ENCODE measurements at regions of chr10 and their contacts with region 1.

Region 1: GRCh38 chr10:120926611-120927010 is 75.4 kb downstream of the WDR11 start:
- DNase-seq: no peak
- ATAC-seq: peak in 1 of 4 donors; percentile 27
- H3K4me3 ChIP-seq: no peak overlapping the region
- H3K27ac ChIP-seq: no peak overlapping the region
- H3K4me1 ChIP-seq: no peaks in the 10 kb centered on the region
- H3K27me3 ChIP-seq: peaks cover 0 to 6% (median 0%) of the 10 kb centered on the region in 9 donors
- CTCF ChIP-seq: no peak
- POLR2A ChIP-seq: no peak

Region 2: GRCh38 chr10:120897343-120897742 is 29.3 kb before region 1 on chr10:
- intact Hi-C with region 1: loop called in 1 of 10 experiments (anchors 2 kb)
- DNase-seq: no peak
- ATAC-seq: no peak
- H3K4me3 ChIP-seq: no peak overlapping the region
- H3K27ac ChIP-seq: no peak overlapping the region
- H3K4me1 ChIP-seq: peaks cover 0 to 3% (median 0%) of the 10 kb centered on the region in 12 donors
- H3K27me3 ChIP-seq: no peaks in the 10 kb centered on the region
- CTCF ChIP-seq: no peak
- POLR2A ChIP-seq: no peak

Region 3: DNA sequence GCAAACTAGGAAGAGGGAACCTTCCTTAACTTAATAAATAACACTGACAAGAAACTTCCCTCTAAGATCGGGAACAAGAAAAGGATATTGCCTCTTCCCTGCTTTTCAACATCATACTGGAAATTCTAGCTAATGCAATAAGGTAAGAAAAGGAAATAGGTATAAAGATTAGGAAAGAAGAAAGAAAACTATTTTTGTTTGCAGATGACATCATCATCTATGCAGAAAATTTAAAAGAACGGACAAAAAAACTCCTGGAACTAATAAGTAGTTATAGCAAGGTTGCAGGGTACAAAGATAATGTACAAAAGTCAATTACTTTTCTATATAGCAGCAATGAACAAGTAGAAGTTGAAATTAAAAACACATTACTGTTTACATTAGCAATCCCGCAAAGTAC is 89.3 kb after region 1 on chr10:
- intact Hi-C with region 1: no loop called
- DNase-seq: no peak
- ATAC-seq: no peak
- H3K4me3 ChIP-seq: no peak overlapping the region
- H3K27ac ChIP-seq: no peak overlapping the region
- H3K4me1 ChIP-seq: no peaks in the 10 kb centered on the region
- H3K27me3 ChIP-seq: no peaks in the 10 kb centered on the region
- CTCF ChIP-seq: no peak
- POLR2A ChIP-seq: no peak

Region 4: GRCh38 chr10:121469797-121470606 is 543.4 kb after region 1 on chr10:
- intact Hi-C with region 1: no loop called
- DNase-seq: no peak
- ATAC-seq: no peak
- H3K4me3 ChIP-seq: no peak overlapping the region
- H3K27ac ChIP-seq: no peak overlapping the region
- H3K4me1 ChIP-seq: no peaks in the 10 kb centered on the region
- H3K27me3 ChIP-seq: peaks cover 0 to 8% (median 0%) of the 10 kb centered on the region in 9 donors
- CTCF ChIP-seq: no peak
- POLR2A ChIP-seq: no peak